ENCODE measurements at regions of chr16 and their contacts with region 1.

Region 1: GRCh38 chr16:47037746-47038458 is 64.4 kb upstream of the DNAJA2 start:
- DNase-seq: peak; percentile 69 to 95 (median 83)
- ATAC-seq: peak; percentile 99
- H3K4me3 ChIP-seq: peak overlapping the region; percentile 62
- H3K4me3 Mint-ChIP-seq: peak overlapping the region; percentile 25 to 85 (median 74)
- H3K27ac ChIP-seq: peak overlapping the region; percentile 27
- H3K27ac Mint-ChIP-seq: peak overlapping the region in 1 of 9 donors; percentile 38
- H3K4me1 ChIP-seq: no peaks in the 10 kb centered on the region
- H3K4me1 Mint-ChIP-seq: peaks cover 0 to 8% (median 4%) of the 10 kb centered on the region in 7 donors
- H3K27me3 ChIP-seq: no peaks in the 10 kb centered on the region
- H3K27me3 Mint-ChIP-seq: peaks cover 0 to 13% (median 0%) of the 10 kb centered on the region in 5 donors

Region 2: DNA sequence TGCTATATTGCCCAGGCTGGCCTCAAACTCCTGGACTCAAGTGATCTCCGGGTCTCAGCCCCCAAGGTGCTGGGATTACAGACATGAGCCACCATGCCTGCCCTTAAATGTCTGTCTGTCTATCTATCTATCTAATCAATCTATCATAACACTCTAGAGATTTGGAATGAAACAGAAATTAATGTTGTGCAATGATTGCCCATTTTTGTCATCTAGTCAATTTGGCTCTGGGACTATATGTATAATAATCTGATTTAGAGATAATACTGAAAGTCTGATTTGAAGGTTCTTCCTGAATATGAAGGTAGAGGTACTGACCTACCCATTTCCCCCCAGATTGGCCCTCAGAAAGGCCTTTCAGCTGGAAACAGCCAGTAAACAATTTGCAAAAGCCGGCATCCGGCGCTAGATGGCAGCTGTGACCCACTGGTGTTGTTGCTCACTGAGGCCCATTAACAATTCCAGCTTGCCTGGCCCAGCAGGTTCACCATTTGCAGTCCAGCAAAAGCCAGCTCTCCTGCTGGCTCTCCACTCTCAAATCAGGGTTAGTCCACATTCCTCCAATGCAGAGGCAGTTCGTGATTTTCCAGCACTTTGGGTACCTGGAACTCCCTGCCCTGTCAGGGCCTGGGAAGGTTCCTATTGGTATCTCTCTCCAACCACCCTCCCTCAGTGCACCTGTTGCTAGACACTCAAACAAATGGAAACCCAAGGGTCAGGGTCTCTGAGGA is 184.0 kb before region 1 on chr16:
- CTCF ChIA-PET with region 1: no interaction called
- POLR2A ChIA-PET with region 1: no interaction called
- intact Hi-C with region 1: loop called in 1 of 2 experiments (anchors 10 kb)
- DNase-seq: peak in 8 of 9 donors; percentile 14 to 57 (median 38)
- ATAC-seq: peak; percentile 67
- H3K4me3 ChIP-seq: no peak overlapping the region
- H3K4me3 Mint-ChIP-seq: no peak overlapping the region
- H3K27ac ChIP-seq: no peak overlapping the region
- H3K27ac Mint-ChIP-seq: no peak overlapping the region
- H3K4me1 ChIP-seq: no peaks in the 10 kb centered on the region
- H3K4me1 Mint-ChIP-seq: peaks cover 0 to 8% (median 0%) of the 10 kb centered on the region in 7 donors
- H3K27me3 ChIP-seq: no peaks in the 10 kb centered on the region
- H3K27me3 Mint-ChIP-seq: peaks cover 0 to 10% (median 0%) of the 10 kb centered on the region in 5 donors

Region 3: DNA sequence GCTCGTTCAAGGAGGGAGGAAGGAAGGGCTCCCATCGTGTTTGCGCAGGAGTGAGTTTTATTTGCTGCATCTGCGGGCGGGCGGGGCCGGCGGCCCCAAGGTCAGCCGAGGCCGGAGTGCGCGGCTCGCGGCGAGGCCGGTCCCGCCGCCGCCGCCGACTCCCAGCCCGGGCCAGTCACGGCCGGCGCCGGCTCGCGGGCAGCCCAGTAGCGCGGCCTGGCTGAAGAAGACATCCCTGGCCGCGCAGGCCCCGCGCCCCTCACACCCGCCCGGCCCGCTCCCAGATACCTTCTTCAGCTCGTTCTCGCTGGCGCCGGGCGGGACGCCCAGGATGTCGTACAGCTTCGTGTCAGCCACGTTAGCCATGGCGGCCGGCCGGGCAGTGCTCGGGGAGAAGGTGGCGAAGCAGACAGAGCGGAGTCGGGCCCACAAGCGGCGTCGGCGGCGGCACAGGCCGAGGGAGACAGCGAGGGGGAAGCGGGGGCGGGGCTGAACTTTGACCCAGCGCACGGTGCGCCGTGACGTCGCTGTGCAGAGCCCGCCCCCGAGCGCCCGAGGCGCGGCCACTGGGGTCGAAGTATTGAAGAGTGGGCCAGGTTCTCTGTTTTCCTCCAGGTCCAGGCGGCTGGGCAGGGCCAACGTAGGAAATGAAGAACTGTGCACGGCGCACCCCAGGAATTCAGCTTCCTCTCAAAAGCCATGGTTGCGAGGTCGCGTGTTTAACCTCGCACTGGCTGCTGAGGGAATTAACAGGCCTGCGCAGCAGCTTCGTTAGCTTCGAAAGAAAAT is 64.5 kb before region 1 on chr16 and contains the start of gene DNAJA2:
- CTCF ChIA-PET with region 1: interaction called, 6 read pairs
- POLR2A ChIA-PET with region 1: interaction called, 6 read pairs
- intact Hi-C with region 1: loop called (anchors 1 to 2 kb)
- DNase-seq: peak; percentile 86 to 95 (median 92)
- ATAC-seq: peak; percentile 98
- H3K4me3 ChIP-seq: peak within 1 kb of the TSS; percentile 81
- H3K4me3 Mint-ChIP-seq: peak within 1 kb of the TSS; percentile 88 to 98 (median 95)
- H3K27ac ChIP-seq: peak within 1 kb of the TSS; percentile 93
- H3K27ac Mint-ChIP-seq: peak within 1 kb of the TSS; percentile 87 to 100 (median 99)
- H3K4me1 ChIP-seq: peaks cover 26 to 33% of the 10 kb centered on the region in 2 donors
- H3K4me1 Mint-ChIP-seq: peaks cover 27 to 70% (median 51%) of the 10 kb centered on the region in 7 donors
- H3K27me3 ChIP-seq: no peaks in the 10 kb centered on the region
- H3K27me3 Mint-ChIP-seq: no peaks in the 10 kb centered on the region
- total RNA-seq, gene DNAJA2: 59.4 to 73.3 (median 60.9) TPM

Region 4: DNA sequence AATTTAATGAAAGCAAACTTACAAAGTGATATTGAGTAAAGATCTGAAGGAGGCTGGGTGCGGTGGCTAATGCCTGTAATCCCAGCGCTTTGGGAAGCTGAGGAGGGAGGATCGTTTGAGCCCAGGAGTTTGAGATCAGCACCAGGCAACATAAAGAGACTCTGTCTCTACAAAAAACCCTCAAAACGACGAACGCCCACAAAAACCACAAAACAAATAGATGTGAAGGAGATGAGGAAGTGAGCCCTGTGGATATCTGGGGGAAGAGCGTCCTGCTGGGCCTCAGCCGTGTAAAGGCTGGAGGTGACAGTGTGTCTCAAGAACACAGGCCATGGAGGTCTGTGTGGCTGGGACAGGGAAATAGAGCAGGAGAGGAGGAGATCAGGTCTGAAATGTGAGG is 354.2 kb after region 1 on chr16:
- CTCF ChIA-PET with region 1: no interaction called
- POLR2A ChIA-PET with region 1: no interaction called
- intact Hi-C with region 1: no loop called
- DNase-seq: peak in 6 of 9 donors; percentile 1 to 23 (median 12)
- ATAC-seq: peak; percentile 62
- H3K4me3 ChIP-seq: no peak overlapping the region
- H3K4me3 Mint-ChIP-seq: peak overlapping the region in 6 of 10 donors; percentile 2 to 54 (median 12)
- H3K27ac ChIP-seq: no peak overlapping the region
- H3K27ac Mint-ChIP-seq: peak overlapping the region in 2 of 9 donors; percentile 9 to 14
- H3K4me1 ChIP-seq: peaks cover 6 to 16% of the 10 kb centered on the region in 2 donors
- H3K4me1 Mint-ChIP-seq: peaks cover 9 to 37% (median 29%) of the 10 kb centered on the region in 7 donors
- H3K27me3 ChIP-seq: no peaks in the 10 kb centered on the region
- H3K27me3 Mint-ChIP-seq: no peaks in the 10 kb centered on the region

Region 5: DNA sequence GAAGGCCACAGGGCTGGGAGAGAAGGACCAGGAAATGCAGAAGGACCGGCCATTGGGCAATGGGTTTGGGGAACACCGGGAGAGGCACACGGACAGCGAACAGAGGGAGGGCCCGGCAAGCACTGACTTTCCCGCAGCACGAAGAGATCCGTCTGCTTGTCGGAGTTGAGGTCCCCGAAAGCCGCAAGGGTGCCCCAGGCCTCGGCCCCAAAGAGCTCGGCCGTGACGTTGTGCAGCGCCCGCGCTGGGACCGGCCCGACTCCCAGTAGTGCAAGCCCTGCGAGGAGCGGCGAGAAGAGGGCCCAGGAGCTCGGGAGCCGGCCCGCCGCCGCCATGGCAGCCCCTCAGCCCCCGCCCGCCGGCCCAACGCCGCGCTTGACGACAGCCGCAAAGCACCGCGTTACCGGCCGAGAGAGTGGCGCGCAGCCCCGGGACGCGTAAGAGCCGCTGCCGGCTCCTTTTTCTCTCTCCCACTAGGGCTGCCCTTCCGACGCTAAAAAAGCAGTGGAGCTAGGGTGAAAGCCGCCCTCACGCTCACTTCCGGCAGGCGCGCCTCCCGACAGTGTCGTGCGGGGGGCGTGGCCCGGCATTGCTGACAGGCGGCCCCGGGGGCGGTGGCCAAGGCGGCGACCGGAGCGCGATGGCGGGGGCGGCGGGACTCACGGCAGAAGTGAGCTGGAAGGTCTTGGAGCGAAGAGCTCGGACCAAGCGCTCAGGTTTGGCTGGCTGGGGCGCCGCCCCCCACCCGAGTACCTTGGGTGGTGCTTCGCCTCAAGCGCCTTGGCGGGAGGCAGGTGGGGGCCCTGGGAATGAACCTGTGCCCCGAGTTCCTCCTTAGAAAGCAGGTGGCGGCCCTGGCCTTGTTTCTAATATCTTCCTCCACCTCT is 423.1 kb after region 1 on chr16 and contains the starts of genes ITFG1 and PHKB:
- CTCF ChIA-PET with region 1: no interaction called
- POLR2A ChIA-PET with region 1: no interaction called
- intact Hi-C with region 1: loop called (anchors 2 to 5 kb)
- DNase-seq: peak; percentile 94 to 98 (median 97)
- ATAC-seq: peak; percentile 97
- H3K4me3 ChIP-seq: peak within 1 kb of the TSS; percentile 94
- H3K4me3 Mint-ChIP-seq: peak within 1 kb of the TSS; percentile 91 to 100 (median 96)
- H3K27ac ChIP-seq: peak within 1 kb of the TSS; percentile 95
- H3K27ac Mint-ChIP-seq: peak within 1 kb of the TSS; percentile 91 to 99 (median 96)
- H3K4me1 ChIP-seq: peaks cover 10 to 21% of the 10 kb centered on the region in 2 donors
- H3K4me1 Mint-ChIP-seq: peaks cover 45 to 79% (median 73%) of the 10 kb centered on the region in 7 donors
- H3K27me3 ChIP-seq: no peaks in the 10 kb centered on the region
- H3K27me3 Mint-ChIP-seq: no peaks in the 10 kb centered on the region
- total RNA-seq, gene ITFG1: 21.7 to 34.3 (median 29.8) TPM
- total RNA-seq, gene PHKB: 48.5 to 82.9 (median 50.7) TPM

Region 6: DNA sequence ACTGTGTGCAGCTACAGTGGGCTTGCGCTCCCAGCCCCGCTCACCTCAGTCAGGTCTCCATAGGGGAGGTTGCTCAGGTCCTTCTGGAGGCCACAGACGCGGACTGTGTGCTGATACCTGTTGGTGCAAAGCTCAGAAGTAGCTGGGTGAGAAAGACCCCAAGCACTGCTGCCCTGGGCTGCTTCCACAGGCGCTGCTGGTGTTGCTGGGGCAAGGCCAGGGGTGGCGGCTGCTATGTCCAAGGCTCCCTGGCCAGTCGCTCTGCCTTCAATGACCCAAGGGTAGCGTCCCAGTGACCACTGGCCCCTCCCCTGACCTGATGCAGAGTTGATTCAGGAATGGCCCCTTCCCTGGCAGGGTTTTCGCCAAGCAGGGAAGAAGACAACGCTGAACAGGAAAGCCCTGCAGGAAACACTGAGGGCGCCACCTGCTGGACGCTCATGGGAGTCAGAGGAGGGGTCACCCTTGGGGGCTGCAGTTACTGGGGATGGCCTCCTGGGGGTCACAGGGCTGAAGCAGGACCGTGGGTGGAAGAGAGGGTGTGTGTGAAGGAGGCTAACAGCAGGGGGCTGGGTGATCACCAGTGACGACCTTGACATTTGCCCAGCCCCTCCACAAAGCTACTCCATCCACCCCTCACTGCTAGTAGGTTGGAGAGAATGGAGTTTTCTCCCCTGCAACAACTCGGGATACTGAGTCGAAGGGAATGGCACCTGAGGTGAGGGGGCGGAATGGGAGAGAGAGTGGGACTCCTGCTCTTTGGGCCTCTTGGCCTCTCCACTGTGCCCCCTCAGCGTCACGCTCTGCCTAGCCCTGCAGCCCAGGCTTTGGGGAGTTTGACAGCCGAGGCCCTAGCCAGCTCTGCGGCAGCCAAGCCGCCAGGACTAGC is 1079.6 kb after region 1 on chr16:
- CTCF ChIA-PET with region 1: no interaction called
- POLR2A ChIA-PET with region 1: no interaction called
- intact Hi-C with region 1: loop called in 1 of 2 experiments (anchors 2 kb)
- DNase-seq: peak; percentile 7 to 54 (median 26)
- ATAC-seq: peak; percentile 67
- H3K4me3 ChIP-seq: no peak overlapping the region
- H3K4me3 Mint-ChIP-seq: no peak overlapping the region
- H3K27ac ChIP-seq: no peak overlapping the region
- H3K27ac Mint-ChIP-seq: no peak overlapping the region
- H3K4me1 ChIP-seq: no peaks in the 10 kb centered on the region
- H3K4me1 Mint-ChIP-seq: peaks cover 0 to 3% (median 0%) of the 10 kb centered on the region in 7 donors
- H3K27me3 ChIP-seq: no peaks in the 10 kb centered on the region
- H3K27me3 Mint-ChIP-seq: peaks cover 0 to 16% (median 9%) of the 10 kb centered on the region in 5 donors

Region 7: GRCh38 chr16:48164907-48165726 is 1127.2 kb after region 1 on chr16:
- CTCF ChIA-PET with region 1: interaction called, 16 read pairs
- POLR2A ChIA-PET with region 1: no interaction called
- intact Hi-C with region 1: loop called (anchors 1 kb)
- DNase-seq: peak; percentile 20 to 71 (median 45)
- ATAC-seq: peak; percentile 87
- H3K4me3 ChIP-seq: no peak overlapping the region
- H3K4me3 Mint-ChIP-seq: peak overlapping the region in 1 of 10 donors; percentile 32
- H3K27ac ChIP-seq: no peak overlapping the region
- H3K27ac Mint-ChIP-seq: peak overlapping the region in 2 of 9 donors; percentile 50 to 88
- H3K4me1 ChIP-seq: no peaks in the 10 kb centered on the region
- H3K4me1 Mint-ChIP-seq: peaks cover 0 to 8% (median 4%) of the 10 kb centered on the region in 7 donors
- H3K27me3 ChIP-seq: no peaks in the 10 kb centered on the region
- H3K27me3 Mint-ChIP-seq: peaks cover 4 to 8% (median 4%) of the 10 kb centered on the region in 5 donors

Region 8: DNA sequence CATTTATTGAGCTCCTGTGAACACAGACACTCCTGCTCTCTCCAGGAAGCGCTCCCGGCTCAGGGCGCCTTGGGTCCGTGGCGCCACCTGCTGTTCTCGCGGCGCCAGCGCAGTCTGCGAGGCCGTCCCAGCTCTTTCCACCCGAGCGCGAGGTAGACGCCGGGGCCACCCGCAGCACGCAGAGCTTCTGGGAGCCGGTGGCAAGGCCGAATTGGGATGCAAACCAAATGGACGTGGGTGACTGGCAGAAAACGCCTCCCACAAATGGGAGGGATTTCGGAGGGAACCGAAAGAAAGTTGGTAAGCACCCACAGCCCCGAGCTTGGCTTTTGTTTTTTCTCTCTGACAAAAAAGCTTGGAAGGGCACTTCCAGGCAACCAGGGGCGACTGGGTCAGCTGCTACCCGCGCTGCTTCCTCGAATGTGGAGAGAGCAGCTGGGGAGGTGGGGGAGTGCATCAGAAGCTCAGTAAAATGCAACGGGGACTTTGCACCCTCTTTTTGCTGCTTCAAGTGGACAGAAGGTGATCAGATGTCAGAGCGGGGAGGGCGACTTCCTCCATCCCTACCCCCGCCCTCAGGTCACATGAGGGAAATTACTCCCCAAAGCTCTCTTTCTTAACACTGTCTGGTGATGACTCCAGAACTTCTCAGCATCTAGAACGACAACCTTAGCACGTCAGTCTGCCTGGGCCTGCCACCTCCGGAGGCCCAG is 1585.6 kb after region 1 on chr16:
- CTCF ChIA-PET with region 1: no interaction called
- POLR2A ChIA-PET with region 1: no interaction called
- intact Hi-C with region 1: loop called in 1 of 2 experiments (anchors 5 kb)
- DNase-seq: peak; percentile 70 to 90 (median 82)
- ATAC-seq: peak; percentile 97
- H3K4me3 ChIP-seq: peak overlapping the region; percentile 34
- H3K4me3 Mint-ChIP-seq: peak overlapping the region; percentile 82 to 95 (median 86)
- H3K27ac ChIP-seq: peak overlapping the region; percentile 42
- H3K27ac Mint-ChIP-seq: peak overlapping the region; percentile 59 to 93 (median 79)
- H3K4me1 ChIP-seq: peaks cover 0 to 23% of the 10 kb centered on the region in 2 donors
- H3K4me1 Mint-ChIP-seq: peaks cover 14 to 39% (median 33%) of the 10 kb centered on the region in 7 donors
- H3K27me3 ChIP-seq: no peaks in the 10 kb centered on the region
- H3K27me3 Mint-ChIP-seq: peaks cover 0 to 7% (median 0%) of the 10 kb centered on the region in 5 donors

Measured in naive thymus-derived CD4-positive, alpha-beta T cell (primary cell).